Spleen (tissue), 13 donors: ENCODE measurements at regions of chr6 and their contacts with region 1.

Region 1: GRCh38 chr6:122461885-122462284 is 9.7 kb downstream of the SERINC1 start:
- DNase-seq: no peak
- H3K4me3 ChIP-seq: no peak overlapping the region
- H3K27ac ChIP-seq: no peak overlapping the region
- H3K4me1 ChIP-seq: peaks cover 22 to 100% (median 89%) of the 10 kb centered on the region in 6 donors
- H3K27me3 ChIP-seq: no peaks in the 10 kb centered on the region
- CTCF ChIP-seq: no peak
- POLR2A ChIP-seq: no peak

Region 2: DNA sequence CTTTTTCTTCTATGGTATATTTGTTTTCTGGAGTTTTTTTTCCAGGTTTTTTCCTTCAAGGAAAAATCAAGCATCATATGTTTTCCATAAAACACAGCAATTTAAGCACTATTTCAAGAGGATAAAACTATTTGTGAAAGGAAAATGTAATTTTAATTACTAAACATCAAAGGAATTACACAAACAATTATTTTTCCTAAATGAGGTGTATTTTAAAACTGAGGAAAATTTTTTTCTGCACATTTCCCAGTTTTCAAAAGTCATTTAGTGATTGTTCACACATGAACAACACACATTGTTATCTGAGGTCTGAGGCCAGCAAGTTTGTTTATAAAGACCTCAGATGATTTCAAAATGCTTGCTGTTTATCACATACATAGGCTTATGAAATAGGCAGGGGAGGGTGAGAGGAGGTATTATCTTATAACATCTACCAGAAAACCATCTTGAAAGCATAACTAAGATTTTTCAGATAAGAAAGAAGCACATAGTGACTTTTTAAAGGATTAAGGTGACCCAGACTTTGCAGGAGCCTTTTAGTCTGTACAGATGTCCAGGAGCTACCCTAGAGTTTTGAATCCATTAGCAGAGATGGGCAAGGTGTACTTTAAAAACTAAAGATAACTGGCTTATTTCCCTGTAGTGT is 644.9 kb before region 1 on chr6:
- intact Hi-C with region 1: no loop called
- DNase-seq: no peak
- H3K4me3 ChIP-seq: no peak overlapping the region
- H3K27ac ChIP-seq: no peak overlapping the region
- H3K4me1 ChIP-seq: no peaks in the 10 kb centered on the region
- H3K27me3 ChIP-seq: no peaks in the 10 kb centered on the region
- CTCF ChIP-seq: no peak
- POLR2A ChIP-seq: no peak

Region 3: DNA sequence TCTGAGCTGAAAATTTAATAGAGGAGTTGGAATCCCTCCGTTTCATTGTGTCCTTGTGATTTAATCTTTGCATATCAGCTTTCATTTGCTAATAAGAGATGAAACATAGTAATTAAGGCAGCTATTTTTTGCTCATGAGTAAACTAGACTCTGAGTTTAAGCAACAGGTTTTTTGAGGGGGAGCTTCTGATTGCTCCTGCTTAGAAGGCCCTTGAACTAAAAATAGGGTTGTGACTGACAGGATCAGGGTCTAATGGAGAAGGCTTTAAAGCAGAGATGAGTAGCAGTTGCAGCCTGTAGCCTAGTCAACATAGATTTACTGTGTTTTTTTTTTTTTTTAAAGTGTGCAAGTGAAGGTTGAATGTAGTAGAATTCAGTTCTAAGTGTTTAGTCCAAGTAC is 45.1 kb before region 1 on chr6:
- intact Hi-C with region 1: loop called (anchors 10 kb)
- DNase-seq: no peak
- H3K4me3 ChIP-seq: no peak overlapping the region
- H3K27ac ChIP-seq: no peak overlapping the region
- H3K4me1 ChIP-seq: no peaks in the 10 kb centered on the region
- H3K27me3 ChIP-seq: no peaks in the 10 kb centered on the region
- CTCF ChIP-seq: no peak
- POLR2A ChIP-seq: no peak